Activated CD4-positive, alpha-beta T cell treated with anti-CD3 and anti-CD28 coated beads, Interleukin-2, amount 10 ng/mL, durations not matched to agents 24 days and 14 days (primary cell): ENCODE measurements at regions of chr12 and their contacts with region 1.

Region 1: GRCh38 chr12:133130038-133130807 is at the starts of genes ZNF10 and ZNF891:
- DNase-seq: peak; percentile 99
- H3K4me3 Mint-ChIP-seq: peak within 1 kb of the TSS; percentile 98
- H3K27ac Mint-ChIP-seq: peak within 1 kb of the TSS; percentile 99
- H3K4me1 Mint-ChIP-seq: peaks cover 11% of the 10 kb centered on the region
- H3K27me3 Mint-ChIP-seq: no peaks in the 10 kb centered on the region
- total RNA-seq, gene ZNF10: 3.3 and 4.2 TPM in 2 replicates
- total RNA-seq, gene ZNF891: 2.2 and 2.4 TPM in 2 replicates

Region 2: DNA sequence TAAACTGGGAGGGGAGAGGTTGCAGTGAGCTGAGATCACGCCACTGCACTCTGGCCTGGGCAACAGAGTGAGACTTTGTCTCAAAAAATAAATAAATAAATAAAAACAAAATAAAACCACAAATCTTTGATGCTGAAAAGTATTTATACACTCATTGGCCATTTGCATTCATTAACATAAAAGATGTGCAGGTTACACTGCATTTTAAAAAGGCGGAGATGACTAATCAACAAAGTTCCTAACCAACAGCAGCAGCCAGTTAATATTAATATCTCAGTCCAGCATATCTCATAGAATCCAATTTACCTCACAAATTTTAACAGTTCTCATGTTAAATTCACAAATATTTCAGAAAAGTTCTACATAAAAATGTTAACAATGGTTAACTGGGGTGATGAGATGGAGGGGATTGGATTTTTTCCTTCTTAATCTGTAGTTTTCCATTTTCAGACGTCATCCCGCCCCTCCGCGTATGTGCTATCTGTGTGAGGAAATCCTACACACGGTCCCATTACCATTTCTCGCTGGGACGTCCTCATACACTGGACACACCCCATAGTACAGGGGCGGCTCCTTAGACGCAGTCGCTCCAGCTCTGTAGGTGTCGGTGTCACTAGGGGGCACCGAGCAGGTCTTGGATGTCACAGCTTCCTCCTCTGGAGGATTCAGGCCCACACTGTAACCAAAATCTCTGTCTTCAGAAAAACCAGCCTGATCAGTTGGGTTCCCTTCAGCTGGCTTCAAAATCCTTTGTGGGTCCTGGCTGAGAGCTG is 375.9 kb before region 1 on chr12:
- intact Hi-C with region 1: no loop called
- DNase-seq: no peak
- H3K4me3 Mint-ChIP-seq: no peak overlapping the region
- H3K27ac Mint-ChIP-seq: no peak overlapping the region
- H3K4me1 Mint-ChIP-seq: peaks cover 6% of the 10 kb centered on the region
- H3K27me3 Mint-ChIP-seq: no peaks in the 10 kb centered on the region

Region 3: DNA sequence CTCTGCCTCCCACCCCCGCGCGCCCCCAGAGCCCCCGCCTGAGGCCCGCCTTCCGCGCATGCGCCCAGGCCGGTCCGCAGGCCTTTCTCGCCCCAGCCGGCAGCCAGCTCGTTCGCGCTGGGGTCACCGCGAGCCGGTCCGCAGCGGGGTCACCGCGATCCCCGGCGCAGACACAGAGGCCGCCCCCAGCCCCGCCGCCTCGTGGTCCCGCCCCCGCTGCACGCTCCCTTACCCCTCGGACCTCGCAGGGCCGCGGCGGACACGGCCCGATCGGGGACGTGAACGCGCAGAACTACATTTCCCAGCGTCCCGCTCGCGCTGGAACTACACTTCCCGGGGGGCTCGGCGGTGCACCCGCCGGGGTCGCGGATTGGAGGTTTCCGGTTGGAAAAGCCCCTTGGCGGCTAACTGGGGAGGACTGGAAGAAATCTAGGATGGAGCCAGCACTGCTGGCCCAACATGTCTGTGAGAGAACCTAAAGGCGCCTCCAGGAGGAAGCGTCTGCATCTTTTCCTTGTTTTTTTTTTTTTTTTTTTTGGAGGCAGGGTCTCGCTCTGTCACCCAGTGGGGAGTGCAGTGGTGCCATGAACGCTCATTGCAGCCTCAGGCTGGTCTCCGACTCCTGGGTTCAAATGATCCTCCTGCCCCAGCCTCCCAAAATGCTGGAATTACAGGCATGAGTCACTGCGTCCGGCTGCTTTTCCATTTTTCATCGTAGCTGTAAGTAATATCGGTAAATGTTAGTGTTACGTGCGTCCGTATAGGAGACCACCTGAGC is 174.0 kb before region 1 on chr12 and contains the start of gene ZNF605:
- intact Hi-C with region 1: loop called (anchors 1 kb)
- DNase-seq: peak; percentile 96
- H3K4me3 Mint-ChIP-seq: peak within 1 kb of the TSS; percentile 98
- H3K27ac Mint-ChIP-seq: peak within 1 kb of the TSS; percentile 95
- H3K4me1 Mint-ChIP-seq: peaks cover 19% of the 10 kb centered on the region
- H3K27me3 Mint-ChIP-seq: no peaks in the 10 kb centered on the region
- total RNA-seq, gene ZNF605: 6.6 and 7.6 TPM in 2 replicates

Region 4: GRCh38 chr12:133181238-133181959 is 51.2 kb after region 1 on chr12 and contains the start of gene ZNF268:
- intact Hi-C with region 1: loop called (anchors 1 kb)
- DNase-seq: peak; percentile 98
- H3K4me3 Mint-ChIP-seq: peak within 1 kb of the TSS; percentile 92
- H3K27ac Mint-ChIP-seq: peak within 1 kb of the TSS; percentile 93
- H3K4me1 Mint-ChIP-seq: peaks cover 6% of the 10 kb centered on the region
- H3K27me3 Mint-ChIP-seq: no peaks in the 10 kb centered on the region
- total RNA-seq, gene ZNF268: 17.2 and 19.4 TPM in 2 replicates